CD14-positive monocyte (primary cell): ENCODE measurements at regions of chr18 and their contacts with region 1.

Region 1: GRCh38 chr18:24397694-24398365 is at the start of gene OSBPL1A:
- DNase-seq: peak; percentile 92 to 95 (median 93)
- H3K4me3 ChIP-seq: peak within 1 kb of the TSS; percentile 68 to 78 (median 68)
- H3K4me3 Mint-ChIP-seq: peak within 1 kb of the TSS; percentile 83 to 88
- H3K27ac ChIP-seq: peak within 1 kb of the TSS; percentile 95
- H3K27ac Mint-ChIP-seq: peak within 1 kb of the TSS; percentile 78 to 94 (median 91)
- H3K4me1 ChIP-seq: peaks cover 36 to 46% of the 10 kb centered on the region in 2 donors
- H3K4me1 Mint-ChIP-seq: peaks cover 45% of the 10 kb centered on the region
- H3K27me3 ChIP-seq: no peaks in the 10 kb centered on the region
- H3K27me3 Mint-ChIP-seq: no peaks in the 10 kb centered on the region
- CTCF ChIP-seq: no peak
- polyA plus RNA-seq, gene OSBPL1A: 6.3 to 9.1 (median 7.1) TPM

Region 2: DNA sequence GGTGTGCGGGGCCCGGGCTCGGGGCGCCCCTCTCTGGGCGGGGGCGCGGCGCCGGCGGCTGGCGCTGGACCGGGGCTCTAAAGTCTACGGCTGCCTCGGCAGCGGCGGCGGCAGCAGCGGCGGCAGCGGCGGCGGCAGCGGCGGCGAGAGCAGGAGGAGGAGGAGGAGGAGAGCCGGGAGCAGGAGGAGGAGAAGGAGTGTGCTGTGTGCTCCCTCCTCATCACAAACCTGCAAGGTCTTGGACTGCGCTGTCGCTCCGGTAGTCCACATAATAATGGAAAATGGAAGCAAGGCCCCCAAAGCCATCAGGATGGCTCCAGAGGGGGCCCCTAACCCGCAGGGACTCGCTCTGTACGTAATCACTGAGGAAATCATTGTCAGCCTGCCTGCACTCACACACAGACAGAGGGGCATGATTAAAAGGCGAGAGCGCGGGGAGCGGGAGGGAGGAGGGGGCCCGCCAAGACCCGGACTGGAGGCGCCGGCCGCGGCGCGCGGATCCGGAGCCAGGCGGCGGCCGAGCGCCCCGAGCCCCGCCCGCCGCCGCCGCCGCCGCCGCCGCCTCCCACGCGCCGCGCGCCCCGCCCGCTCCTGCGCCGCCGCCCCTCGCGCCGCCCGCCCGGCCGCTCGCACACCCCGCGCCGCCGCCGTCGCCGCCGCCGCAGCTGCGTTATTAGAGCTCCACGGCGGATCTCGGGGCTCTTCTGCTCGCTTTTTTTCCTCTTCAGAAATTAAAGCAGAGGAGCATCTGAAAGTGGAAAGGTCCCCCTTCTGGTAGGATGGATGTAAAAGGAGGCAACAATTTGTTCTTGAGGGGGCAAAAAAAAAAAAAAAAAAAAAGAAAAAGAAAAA is 954.2 kb after region 1 on chr18 and contains the start of gene ZNF521:
- intact Hi-C with region 1: loop called in 1 of 2 experiments (anchors 10 kb)
- DNase-seq: peak; percentile 47 to 62 (median 58)
- H3K4me3 ChIP-seq: peak within 1 kb of the TSS; percentile 73 to 86 (median 73)
- H3K4me3 Mint-ChIP-seq: peak within 1 kb of the TSS; percentile 89 to 93
- H3K27ac ChIP-seq: no peak within 1 kb of the TSS
- H3K27ac Mint-ChIP-seq: peak within 1 kb of the TSS in 3 of 7 donors; percentile 30 to 85 (median 45)
- H3K4me1 ChIP-seq: peaks cover 26 to 27% of the 10 kb centered on the region in 2 donors
- H3K4me1 Mint-ChIP-seq: peaks cover 22% of the 10 kb centered on the region
- H3K27me3 ChIP-seq: peaks cover 63 to 81% of the 10 kb centered on the region in 2 donors
- H3K27me3 Mint-ChIP-seq: peaks cover 50 to 74% (median 55%) of the 10 kb centered on the region in 3 donors
- CTCF ChIP-seq: no peak
- polyA plus RNA-seq, gene ZNF521: 0.07 to 0.20 TPM in 2 of 3 donors, not detected in the other